H1 (cell line): ENCODE measurements at regions of chr20 and their contacts with region 1.

Region 1: DNA sequence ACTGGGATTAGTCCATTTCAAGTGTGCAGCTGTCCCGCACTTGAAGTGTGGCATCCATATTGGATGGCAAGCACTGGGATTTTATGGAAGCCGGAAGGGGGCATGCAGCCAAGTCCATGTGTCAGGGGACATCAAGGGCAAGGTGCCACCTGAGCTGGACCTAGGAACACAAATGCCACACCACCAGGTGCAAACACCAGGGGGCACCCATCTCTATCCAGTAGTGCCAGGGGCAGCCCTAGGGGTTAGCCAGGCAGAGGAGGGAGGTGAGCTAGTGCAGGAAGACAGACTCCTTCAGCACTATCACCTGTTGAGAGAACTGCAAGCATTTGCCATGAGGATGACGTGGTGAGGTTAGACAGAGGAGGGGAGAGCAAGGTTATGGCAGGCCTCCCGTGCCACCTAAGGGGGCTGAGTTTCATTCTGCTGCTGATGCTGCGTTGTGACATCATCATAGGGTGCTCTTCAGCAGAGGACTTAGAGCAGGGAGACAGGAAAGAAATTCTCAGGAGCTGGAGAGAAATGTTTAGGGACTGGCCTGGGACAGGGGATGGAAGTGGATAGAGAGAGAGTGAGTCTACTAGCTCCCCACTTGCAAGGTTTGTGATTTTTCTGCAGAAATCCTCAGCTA is 192.6 kb upstream of the SLC24A3 start:
- DNase-seq: peak in 1 of 2 experiments; percentile 26
- H3K4me3 ChIP-seq: no peak overlapping the region
- H3K27ac ChIP-seq: no peak overlapping the region
- H3K4me1 ChIP-seq: peaks cover 0 to 3% (median under 1%) of the 10 kb centered on the region in 4 experiments; a peak in 3 of 7 replicates
- H3K27me3 ChIP-seq: no peaks in the 10 kb centered on the region
- CTCF ChIP-seq: peak in 2 of 3 experiments; percentile 3 to 24; a peak in 2 of 4 replicates
- EP300 ChIP-seq: no peak
- POLR2A ChIP-seq: no peak
- RAD21 ChIP-seq: no peak; a peak in 1 of 4 replicates

Region 2: GRCh38 chr20:19041787-19042186 is 21.9 kb after region 1 on chr20:
- CTCF ChIA-PET with region 1: no interaction called
- POLR2A ChIA-PET with region 1: no interaction called
- DNase-seq: no peak
- H3K4me3 ChIP-seq: no peak overlapping the region
- H3K27ac ChIP-seq: no peak overlapping the region
- H3K4me1 ChIP-seq: no peaks in the 10 kb centered on the region
- H3K27me3 ChIP-seq: no peaks in the 10 kb centered on the region
- CTCF ChIP-seq: no peak
- EP300 ChIP-seq: no peak
- POLR2A ChIP-seq: no peak
- RAD21 ChIP-seq: no peak

Region 3: GRCh38 chr20:19074828-19075516 is 55.1 kb after region 1 on chr20:
- CTCF ChIA-PET with region 1: interaction called, 11 read pairs
- POLR2A ChIA-PET with region 1: no interaction called
- DNase-seq: peak in 1 of 2 experiments; percentile 20
- H3K4me3 ChIP-seq: no peak overlapping the region
- H3K27ac ChIP-seq: no peak overlapping the region
- H3K4me1 ChIP-seq: no peaks in the 10 kb centered on the region
- H3K27me3 ChIP-seq: no peaks in the 10 kb centered on the region
- CTCF ChIP-seq: no peak
- EP300 ChIP-seq: no peak
- POLR2A ChIP-seq: no peak
- RAD21 ChIP-seq: no peak

Region 4: DNA sequence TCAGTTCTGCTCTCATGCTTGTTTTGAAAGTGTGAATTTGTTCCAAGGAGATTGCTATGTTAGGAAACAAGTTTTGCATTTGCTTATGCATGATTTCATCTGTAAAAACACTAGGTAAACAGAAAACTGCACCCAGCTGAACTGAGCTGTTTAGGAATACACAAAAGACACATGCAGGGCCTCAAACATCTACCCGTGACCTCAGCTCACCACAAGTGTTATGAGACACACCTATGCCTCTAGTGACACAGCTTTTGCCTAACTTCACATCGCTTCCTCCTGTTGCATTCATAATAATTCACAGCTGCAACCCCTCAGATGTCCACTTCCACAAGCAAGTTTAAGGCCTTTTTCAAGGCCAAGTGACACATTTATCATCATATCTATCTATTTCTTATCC is 94.6 kb after region 1 on chr20:
- CTCF ChIA-PET with region 1: no interaction called
- POLR2A ChIA-PET with region 1: no interaction called
- DNase-seq: no peak
- H3K4me3 ChIP-seq: no peak overlapping the region
- H3K27ac ChIP-seq: no peak overlapping the region
- H3K4me1 ChIP-seq: no peaks in the 10 kb centered on the region
- H3K27me3 ChIP-seq: no peaks in the 10 kb centered on the region
- CTCF ChIP-seq: no peak
- EP300 ChIP-seq: no peak
- POLR2A ChIP-seq: no peak
- RAD21 ChIP-seq: no peak